ENCODE measurements at regions of chr2 and their contacts with region 1.

Region 1: GRCh38 chr2:207473049-207473930 is 56.5 kb upstream of the CREB1 start:
- DNase-seq: peak in 1 of 4 experiments; percentile 57
- ATAC-seq: peak; percentile 84
- H3K4me3 ChIP-seq: no peak overlapping the region
- H3K27ac ChIP-seq: no peak overlapping the region
- H3K4me1 ChIP-seq: no peaks in the 10 kb centered on the region; a peak in 1 of 5 replicates
- H3K27me3 ChIP-seq: no peaks in the 10 kb centered on the region
- CTCF ChIP-seq: peak; percentile 50 to 78 (median 52)
- EP300 ChIP-seq: no peak
- POLR2A ChIP-seq: no peak
- RAD21 ChIP-seq: peak; percentile 78 to 82

Region 2: GRCh38 chr2:206693399-206694137 is 779.7 kb before region 1 on chr2:
- CTCF ChIA-PET with region 1: no interaction called
- POLR2A ChIA-PET with region 1: no interaction called
- in situ Hi-C with region 1: loop called (anchors 5 kb)
- intact Hi-C with region 1: loop called (anchors 1 kb)
- DNase-seq: peak; percentile 25 to 59 (median 30)
- ATAC-seq: peak; percentile 81
- H3K4me3 ChIP-seq: no peak overlapping the region
- H3K27ac ChIP-seq: no peak overlapping the region
- H3K4me1 ChIP-seq: no peaks in the 10 kb centered on the region
- H3K27me3 ChIP-seq: no peaks in the 10 kb centered on the region; a peak in 1 of 5 replicates
- CTCF ChIP-seq: peak; percentile 37 to 60 (median 51); a peak in 5 of 6 replicates
- EP300 ChIP-seq: no peak
- POLR2A ChIP-seq: no peak
- RAD21 ChIP-seq: peak; percentile 63 to 69

Region 3: GRCh38 chr2:206981739-206982340 is 491.4 kb before region 1 on chr2:
- CTCF ChIA-PET with region 1: no interaction called
- POLR2A ChIA-PET with region 1: no interaction called
- in situ Hi-C with region 1: loop called (anchors 25 kb)
- intact Hi-C with region 1: loop called (anchors 5 kb)
- DNase-seq: peak in 3 of 4 experiments; percentile 2 to 10 (median 5)
- ATAC-seq: no peak
- H3K4me3 ChIP-seq: no peak overlapping the region
- H3K27ac ChIP-seq: no peak overlapping the region
- H3K4me1 ChIP-seq: no peaks in the 10 kb centered on the region
- H3K27me3 ChIP-seq: no peaks in the 10 kb centered on the region; a peak in 1 of 5 replicates
- CTCF ChIP-seq: peak; percentile 23 to 37 (median 31); a peak in 4 of 6 replicates
- EP300 ChIP-seq: no peak
- POLR2A ChIP-seq: no peak
- RAD21 ChIP-seq: peak; percentile 53 to 57

Region 4: GRCh38 chr2:207143215-207144172 is 329.8 kb before region 1 on chr2:
- CTCF ChIA-PET with region 1: no interaction called
- POLR2A ChIA-PET with region 1: no interaction called
- in situ Hi-C with region 1: no loop called
- intact Hi-C with region 1: loop called (anchors 2 kb)
- DNase-seq: no peak
- ATAC-seq: no peak
- H3K4me3 ChIP-seq: no peak overlapping the region
- H3K27ac ChIP-seq: no peak overlapping the region
- H3K4me1 ChIP-seq: no peaks in the 10 kb centered on the region; a peak in 1 of 5 replicates
- H3K27me3 ChIP-seq: peaks cover 0 to 3% of the 10 kb centered on the region in 2 experiments; a peak in 2 of 5 replicates
- CTCF ChIP-seq: no peak
- EP300 ChIP-seq: no peak
- POLR2A ChIP-seq: no peak
- RAD21 ChIP-seq: no peak

Region 5: DNA sequence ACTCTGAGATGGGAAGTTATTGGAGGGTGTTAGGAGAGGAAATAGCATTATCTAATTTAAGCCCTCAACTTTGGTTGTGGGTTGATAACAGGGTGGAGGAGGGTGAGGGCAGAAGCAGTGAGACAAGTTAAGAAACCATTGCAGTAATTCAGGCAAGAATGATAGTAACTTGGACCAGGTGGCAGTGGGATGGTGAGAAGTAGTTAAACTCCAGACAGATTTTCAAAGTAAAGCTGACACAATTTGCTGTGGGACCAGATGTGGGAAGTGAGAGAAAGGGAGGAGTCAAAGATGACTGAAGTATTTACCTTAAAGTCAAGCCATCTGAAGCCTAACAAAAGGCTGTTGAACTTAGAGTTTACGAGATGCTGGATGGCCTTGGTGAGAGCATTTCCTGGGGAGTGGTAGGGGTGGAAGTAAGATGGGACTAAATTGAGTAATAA is 144.3 kb before region 1 on chr2:
- CTCF ChIA-PET with region 1: no interaction called
- POLR2A ChIA-PET with region 1: no interaction called
- in situ Hi-C with region 1: loop called (anchors 5 kb)
- intact Hi-C with region 1: no loop called
- DNase-seq: no peak
- ATAC-seq: no peak
- H3K4me3 ChIP-seq: no peak overlapping the region
- H3K27ac ChIP-seq: no peak overlapping the region
- H3K4me1 ChIP-seq: no peaks in the 10 kb centered on the region; a peak in 1 of 5 replicates
- H3K27me3 ChIP-seq: no peaks in the 10 kb centered on the region
- CTCF ChIP-seq: no peak
- EP300 ChIP-seq: no peak
- POLR2A ChIP-seq: no peak
- RAD21 ChIP-seq: no peak